ENCODE measurements at regions of chr6 and their contacts with region 1.

Region 1: GRCh38 chr6:125314019-125314581 is 12.3 kb upstream of the HDDC2 start:
- H3K4me3 Mint-ChIP-seq: no peak overlapping the region
- H3K27ac Mint-ChIP-seq: no peak overlapping the region
- H3K4me1 Mint-ChIP-seq: no peaks in the 10 kb centered on the region
- H3K27me3 Mint-ChIP-seq: peaks cover 18% of the 10 kb centered on the region

Region 2: GRCh38 chr6:125197795-125198269 is 116.3 kb before region 1 on chr6:
- intact Hi-C with region 1: no loop called
- H3K4me3 Mint-ChIP-seq: no peak overlapping the region
- H3K27ac Mint-ChIP-seq: no peak overlapping the region
- H3K4me1 Mint-ChIP-seq: peaks cover 42% of the 10 kb centered on the region
- H3K27me3 Mint-ChIP-seq: no peaks in the 10 kb centered on the region

Region 3: GRCh38 chr6:125236536-125237327 is 77.4 kb before region 1 on chr6:
- intact Hi-C with region 1: no loop called
- H3K4me3 Mint-ChIP-seq: no peak overlapping the region
- H3K27ac Mint-ChIP-seq: no peak overlapping the region
- H3K4me1 Mint-ChIP-seq: peaks cover 5% of the 10 kb centered on the region
- H3K27me3 Mint-ChIP-seq: no peaks in the 10 kb centered on the region

Region 4: DNA sequence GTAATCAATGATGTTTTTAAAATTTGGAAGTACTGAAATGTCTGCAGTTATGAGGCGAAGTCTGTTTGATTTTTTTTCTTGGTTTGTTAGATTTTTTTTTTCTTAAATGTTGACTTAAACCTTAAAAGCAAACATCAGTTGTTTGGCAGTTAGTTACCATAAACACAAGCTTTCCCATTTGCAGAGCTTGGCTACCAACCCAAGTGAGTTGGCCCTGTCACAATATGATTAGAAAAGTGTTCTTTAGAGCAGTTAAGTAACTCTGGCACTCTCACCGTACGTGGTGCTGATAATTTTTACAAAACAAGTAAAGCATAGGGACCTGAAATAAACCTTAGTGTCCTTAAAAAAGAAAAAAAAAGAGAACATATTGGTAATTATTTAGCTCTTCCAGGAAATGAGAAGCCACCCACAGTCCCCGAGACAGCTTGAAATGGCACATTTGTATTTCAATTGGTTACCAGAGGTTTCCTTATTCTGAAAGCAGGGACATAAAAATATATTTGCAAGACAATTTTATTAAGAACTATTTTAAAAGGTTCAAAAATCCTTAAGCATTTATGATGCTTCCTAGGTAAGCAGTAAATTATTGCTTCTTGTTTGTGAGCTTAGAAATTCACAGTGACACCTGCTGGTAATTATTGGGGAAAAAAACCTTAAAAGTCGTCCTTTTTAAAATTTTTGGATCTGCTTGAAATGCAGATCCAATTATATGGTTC is 439.3 kb after region 1 on chr6:
- intact Hi-C with region 1: loop called (anchors 1 kb)
- H3K4me3 Mint-ChIP-seq: no peak overlapping the region
- H3K27ac Mint-ChIP-seq: no peak overlapping the region
- H3K4me1 Mint-ChIP-seq: peaks cover 20% of the 10 kb centered on the region
- H3K27me3 Mint-ChIP-seq: peaks cover 67% of the 10 kb centered on the region

Region 5: GRCh38 chr6:125769147-125769783 is 455.2 kb after region 1 on chr6:
- intact Hi-C with region 1: loop called (anchors 1 kb)
- H3K4me3 Mint-ChIP-seq: no peak overlapping the region
- H3K27ac Mint-ChIP-seq: no peak overlapping the region
- H3K4me1 Mint-ChIP-seq: peaks cover 5% of the 10 kb centered on the region
- H3K27me3 Mint-ChIP-seq: peaks cover 23% of the 10 kb centered on the region

Region 6: GRCh38 chr6:125974214-125974866 is 660.2 kb after region 1 on chr6:
- intact Hi-C with region 1: loop called (anchors 5 kb)
- H3K4me3 Mint-ChIP-seq: no peak overlapping the region
- H3K27ac Mint-ChIP-seq: no peak overlapping the region
- H3K4me1 Mint-ChIP-seq: peaks cover 4% of the 10 kb centered on the region
- H3K27me3 Mint-ChIP-seq: no peaks in the 10 kb centered on the region

Measured in dendritic cell treated with granulocyte-macrophage colony-stimulating factor and Interleukin-4, amounts not matched to agents 40 ng/mL and 50 ng/mL, for 4 days (primary cell).